ENCODE measurements at regions of chr17 and their contacts with region 1.

Region 1: DNA sequence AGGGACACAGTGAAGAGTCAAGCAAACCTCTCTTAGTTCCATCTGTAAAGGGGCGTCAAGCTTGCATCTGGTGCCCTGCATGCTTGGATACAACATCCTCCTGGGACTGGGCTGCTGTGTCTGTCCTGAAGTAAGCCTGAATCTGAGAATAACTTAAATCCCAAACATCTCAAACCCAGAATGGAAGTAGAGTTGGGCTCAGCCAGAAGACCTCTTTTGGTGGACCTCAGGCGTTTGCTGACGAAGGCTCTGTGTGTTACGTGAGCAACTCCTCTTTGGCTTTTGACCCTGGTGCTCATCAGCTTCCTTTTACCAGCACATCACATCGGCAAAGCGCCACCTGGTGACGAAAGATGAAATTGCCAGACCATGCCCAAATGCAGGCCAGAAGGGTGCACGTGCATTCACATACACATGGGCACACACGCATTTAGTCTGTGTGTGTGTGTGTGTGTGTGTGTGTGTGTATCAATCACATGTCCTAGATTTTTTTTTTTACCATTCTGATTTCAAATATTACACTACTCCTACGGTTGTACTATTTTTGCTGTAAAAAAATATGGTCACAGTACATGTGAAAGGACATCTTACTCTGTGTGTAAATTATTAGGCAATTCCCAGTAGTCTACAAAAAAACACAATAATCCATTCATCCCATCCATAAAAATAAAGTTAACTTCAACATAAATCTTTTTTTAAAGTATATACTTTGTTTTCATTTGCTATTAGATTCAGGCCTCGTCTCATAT is 41.1 kb upstream of the FOXJ1 start:
- DNase-seq: peak; percentile 89
- ATAC-seq: peak; percentile 89
- H3K4me3 ChIP-seq: no peak overlapping the region
- H3K27ac ChIP-seq: no peak overlapping the region
- H3K4me1 ChIP-seq: peaks cover 37% of the 10 kb centered on the region
- H3K27me3 ChIP-seq: peaks cover 0 to 1% of the 10 kb centered on the region in 2 experiments; a peak in 1 of 5 replicates
- CTCF ChIP-seq: peak; percentile 99
- EP300 ChIP-seq: peak in 1 of 2 experiments; percentile 21; a peak in 1 of 4 replicates
- POLR2A ChIP-seq: no peak
- RAD21 ChIP-seq: peak; percentile 90

Region 2: GRCh38 chr17:76014184-76014924 is 167.8 kb before region 1 on chr17:
- CTCF ChIA-PET with region 1: interaction called, 4 read pairs
- POLR2A ChIA-PET with region 1: no interaction called
- in situ Hi-C with region 1: no loop called
- intact Hi-C with region 1: loop called (anchors 1 kb)
- DNase-seq: peak; percentile 72
- ATAC-seq: peak; percentile 92
- H3K4me3 ChIP-seq: no peak overlapping the region
- H3K27ac ChIP-seq: no peak overlapping the region
- H3K4me1 ChIP-seq: peaks cover 5% of the 10 kb centered on the region; the same call in 1 of the 2 replicates
- H3K27me3 ChIP-seq: no peaks in the 10 kb centered on the region
- CTCF ChIP-seq: peak; percentile 100
- EP300 ChIP-seq: no peak
- POLR2A ChIP-seq: no peak
- RAD21 ChIP-seq: peak; percentile 98

Region 3: DNA sequence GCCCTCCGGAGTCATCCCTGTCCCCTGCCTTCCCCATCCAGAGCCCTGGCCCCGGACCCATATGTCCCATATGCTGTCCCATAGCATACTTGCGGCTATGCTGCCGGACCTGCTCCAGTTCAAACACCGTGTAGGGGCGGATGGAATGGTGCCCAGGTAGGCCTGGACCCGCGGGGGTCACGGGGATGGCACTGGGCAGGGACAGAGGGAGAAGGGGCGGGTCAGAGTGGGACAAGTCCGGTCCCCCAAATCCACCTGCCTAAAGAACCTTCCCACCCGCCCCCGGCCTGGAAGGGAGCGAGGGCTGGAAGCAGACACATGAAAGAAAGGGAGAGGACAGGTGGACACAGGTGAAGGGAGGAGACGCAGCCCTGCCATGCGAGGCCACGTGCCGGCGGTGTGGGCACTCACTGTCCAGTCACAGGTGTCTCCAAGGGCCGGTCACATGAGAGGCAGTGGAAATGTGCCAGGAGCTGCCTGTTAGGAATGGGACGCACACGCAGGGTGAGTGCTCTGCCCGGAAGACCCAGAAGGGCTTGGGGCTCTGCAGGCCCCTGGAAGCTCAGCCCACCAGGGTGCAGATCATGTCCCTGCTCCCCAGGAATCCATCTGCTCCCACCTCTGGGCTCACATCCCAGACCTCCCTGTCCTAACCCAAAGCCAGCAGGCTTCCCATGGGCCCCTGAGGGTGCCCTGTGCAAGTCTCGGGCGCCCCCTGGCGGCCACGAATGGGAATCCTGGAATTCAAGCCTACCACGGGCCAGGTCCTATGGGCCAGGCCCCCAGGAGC is 97.0 kb after region 1 on chr17:
- CTCF ChIA-PET with region 1: interaction called, 7 read pairs
- POLR2A ChIA-PET with region 1: no interaction called
- in situ Hi-C with region 1: loop called (anchors 10 kb)
- intact Hi-C with region 1: loop called (anchors 10 kb)
- DNase-seq: peak; percentile 74
- ATAC-seq: peak; percentile 87
- H3K4me3 ChIP-seq: no peak overlapping the region
- H3K27ac ChIP-seq: no peak overlapping the region
- H3K4me1 ChIP-seq: peaks cover 25% of the 10 kb centered on the region
- H3K27me3 ChIP-seq: no peaks in the 10 kb centered on the region
- CTCF ChIP-seq: peak; percentile 98
- EP300 ChIP-seq: no peak
- POLR2A ChIP-seq: no peak
- RAD21 ChIP-seq: peak; percentile 98